Brain microvascular endothelial cell (primary cell): ENCODE measurements at regions of chr3 and their contacts with region 1.

Region 1: GRCh38 chr3:15629860-15630597 is 28.5 kb downstream of the BTD start:
- DNase-seq: peak; percentile 88
- H3K4me3 ChIP-seq: peak overlapping the region; percentile 18
- H3K27ac ChIP-seq: peak overlapping the region; percentile 90
- H3K27me3 ChIP-seq: no peaks in the 10 kb centered on the region
- CTCF ChIP-seq: peak; percentile 77

Region 2: DNA sequence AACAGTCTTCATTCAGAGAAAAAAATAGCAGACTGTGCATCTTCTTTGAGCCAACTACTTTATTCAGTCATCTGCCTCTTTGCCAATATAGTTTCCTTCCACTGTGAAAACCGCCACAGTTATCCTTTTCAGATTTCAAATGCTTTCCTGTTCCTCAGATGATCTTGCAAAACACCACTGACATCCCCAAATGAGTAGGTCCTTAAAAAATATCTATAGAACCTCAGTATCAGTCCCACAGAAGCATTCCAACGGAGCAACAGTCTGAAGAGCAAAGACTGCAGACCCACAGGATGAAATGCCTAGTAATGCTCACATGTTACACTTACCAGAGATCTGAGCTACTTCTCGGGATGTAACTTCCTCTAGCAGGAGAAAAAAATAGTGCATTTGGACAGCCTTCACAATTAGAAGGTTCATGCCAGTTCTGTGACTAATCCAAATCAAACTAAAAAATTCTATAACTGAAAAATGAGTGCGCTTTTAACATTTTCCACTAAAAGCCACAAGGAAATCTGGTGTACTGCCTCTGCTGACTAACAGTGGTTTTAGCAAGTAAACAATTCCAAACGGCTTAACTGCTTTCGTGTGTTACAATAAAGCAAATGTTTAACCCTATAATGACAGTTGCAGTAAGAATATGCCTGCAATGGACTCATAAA is 167.7 kb after region 1 on chr3 and contains the start of gene ANKRD28:
- in situ Hi-C with region 1: loop called (anchors 25 kb)
- DNase-seq: peak; percentile 87
- H3K4me3 ChIP-seq: peak within 1 kb of the TSS; percentile 70
- H3K27ac ChIP-seq: peak within 1 kb of the TSS; percentile 93
- H3K27me3 ChIP-seq: no peaks in the 10 kb centered on the region
- CTCF ChIP-seq: peak; percentile 13